ENCODE measurements at regions of chr4 and their contacts with region 1.

Region 1: GRCh38 chr4:11765849-11766453 is 337.3 kb upstream of the HS3ST1 start:
- DNase-seq: peak; percentile 28
- H3K4me3 ChIP-seq: no peak overlapping the region
- H3K27ac ChIP-seq: no peak overlapping the region
- H3K4me1 ChIP-seq: no peaks in the 10 kb centered on the region
- H3K27me3 ChIP-seq: no peaks in the 10 kb centered on the region
- CTCF ChIP-seq: peak; percentile 64

Region 2: DNA sequence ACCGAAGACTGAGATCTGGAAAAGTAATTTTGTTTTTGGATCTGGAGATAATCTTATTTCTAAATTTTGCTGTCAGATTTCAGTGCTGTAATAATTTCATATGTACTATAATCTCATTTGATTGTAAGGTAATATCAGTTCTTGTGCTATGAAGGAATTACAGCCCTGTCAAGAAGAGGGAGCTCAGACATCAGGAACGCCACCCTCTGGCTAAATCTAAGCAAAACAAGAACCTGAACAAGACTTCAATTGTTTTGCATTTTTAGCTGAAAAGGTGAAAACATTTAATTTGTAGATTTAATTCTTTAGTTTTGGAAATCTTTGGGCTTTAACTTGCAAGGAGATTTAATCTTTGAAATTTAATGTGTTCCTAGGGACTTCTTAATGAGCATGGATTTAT is 188.1 kb after region 1 on chr4:
- intact Hi-C with region 1: loop called (anchors 10 kb)
- DNase-seq: peak; percentile 23
- H3K4me3 ChIP-seq: no peak overlapping the region
- H3K27ac ChIP-seq: no peak overlapping the region
- H3K4me1 ChIP-seq: no peaks in the 10 kb centered on the region
- H3K27me3 ChIP-seq: no peaks in the 10 kb centered on the region
- CTCF ChIP-seq: no peak

Region 3: GRCh38 chr4:12016729-12017128 is 250.8 kb after region 1 on chr4:
- intact Hi-C with region 1: no loop called
- DNase-seq: no peak
- H3K4me3 ChIP-seq: no peak overlapping the region
- H3K27ac ChIP-seq: no peak overlapping the region
- H3K4me1 ChIP-seq: no peaks in the 10 kb centered on the region
- H3K27me3 ChIP-seq: no peaks in the 10 kb centered on the region
- CTCF ChIP-seq: no peak

Region 4: DNA sequence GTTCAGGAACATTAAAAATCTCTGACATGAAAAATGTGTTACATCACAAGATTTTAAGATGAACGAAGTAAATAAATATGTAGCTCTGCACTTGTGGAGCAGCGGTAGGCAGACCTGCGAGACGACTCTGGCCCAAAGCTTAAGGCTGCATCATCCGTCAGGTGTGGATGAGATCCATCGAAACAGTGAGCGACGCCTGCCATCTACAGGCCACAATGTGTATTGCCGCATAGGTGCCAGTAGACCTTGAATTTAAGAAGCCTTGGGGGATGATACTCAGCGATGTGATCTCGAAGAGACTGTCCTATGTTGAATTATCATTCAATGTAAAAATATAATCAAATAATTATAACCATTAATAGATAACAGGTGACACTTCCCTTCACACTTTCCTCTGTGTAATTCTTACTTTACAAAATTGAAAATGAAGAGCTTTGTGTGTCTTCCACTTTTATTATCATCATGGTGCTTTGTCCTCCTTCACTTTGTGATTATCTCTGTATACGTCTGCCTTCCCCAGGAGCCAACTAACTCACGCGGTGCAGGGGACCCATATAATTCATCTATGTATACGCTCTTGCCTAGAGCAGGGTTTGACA is 867.2 kb after region 1 on chr4:
- intact Hi-C with region 1: loop called (anchors 10 kb)
- DNase-seq: peak; percentile 87
- H3K4me3 ChIP-seq: no peak overlapping the region
- H3K27ac ChIP-seq: no peak overlapping the region
- H3K4me1 ChIP-seq: no peaks in the 10 kb centered on the region
- H3K27me3 ChIP-seq: no peaks in the 10 kb centered on the region
- CTCF ChIP-seq: peak; percentile 85

Measured in colonic mucosa (tissue), 4 donors.